GM23248 (cell line): ENCODE measurements at regions of chr6 and their contacts with region 1.

Region 1: GRCh38 chr6:82247634-82248232 is at the start of gene IBTK:
- DNase-seq: peak; percentile 97
- H3K4me3 ChIP-seq: peak within 1 kb of the TSS; percentile 94
- H3K27ac ChIP-seq: peak within 1 kb of the TSS; percentile 98
- H3K4me1 ChIP-seq: peaks cover 39% of the 10 kb centered on the region
- H3K27me3 ChIP-seq: no peaks in the 10 kb centered on the region
- total RNA-seq, gene IBTK: 41.9 and 44.5 TPM in 2 replicates

Region 2: DNA sequence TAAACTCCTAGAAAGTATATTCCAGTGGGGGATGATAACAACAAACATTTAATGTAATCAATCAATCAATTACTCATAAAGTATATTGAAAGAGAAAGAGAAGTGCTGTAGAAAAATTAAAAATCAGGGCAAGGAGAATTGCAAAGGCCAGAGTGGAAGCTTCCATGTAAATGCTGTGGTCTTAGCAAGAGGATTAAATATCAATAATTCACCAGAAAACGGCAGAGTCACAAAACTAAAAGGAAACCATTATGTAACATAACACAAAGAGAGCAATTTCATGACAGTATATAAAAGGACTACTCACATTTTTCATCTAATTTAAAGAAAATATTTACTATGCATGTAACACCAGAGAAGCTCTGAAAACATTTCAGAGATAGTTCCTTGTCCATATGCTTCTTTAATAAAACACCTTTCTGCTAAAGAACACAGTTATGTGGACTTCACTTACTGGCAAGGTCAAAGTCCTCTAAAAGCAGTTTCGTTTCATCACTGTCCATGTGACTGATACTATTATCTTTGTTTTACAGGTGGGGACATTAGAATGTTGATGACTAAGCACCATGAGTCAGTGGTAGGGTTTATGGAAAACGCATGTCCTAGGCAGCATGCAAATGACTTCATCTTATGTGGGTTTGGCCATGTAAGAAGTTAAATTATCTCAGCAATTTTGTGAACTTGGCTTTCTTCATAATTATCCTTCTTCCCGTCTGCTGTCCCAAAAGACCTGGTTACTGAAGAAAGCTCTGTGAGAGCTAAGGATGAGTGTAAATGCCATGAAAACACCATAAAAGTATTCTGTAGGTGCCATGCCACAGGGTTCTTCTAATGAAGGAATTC is 309.5 kb before region 1 on chr6:
- in situ Hi-C with region 1: no loop called
- DNase-seq: peak; percentile 92
- H3K4me3 ChIP-seq: peak overlapping the region; percentile 29
- H3K27ac ChIP-seq: peak overlapping the region; percentile 77
- H3K4me1 ChIP-seq: peaks cover 44% of the 10 kb centered on the region
- H3K27me3 ChIP-seq: no peaks in the 10 kb centered on the region

Region 3: GRCh38 chr6:83057705-83058321 is 810.1 kb after region 1 on chr6:
- in situ Hi-C with region 1: loop called (anchors 5 kb)
- DNase-seq: peak; percentile 75
- H3K4me3 ChIP-seq: no peak overlapping the region
- H3K27ac ChIP-seq: no peak overlapping the region
- H3K4me1 ChIP-seq: peaks cover 15% of the 10 kb centered on the region
- H3K27me3 ChIP-seq: no peaks in the 10 kb centered on the region

Region 4: GRCh38 chr6:83192871-83193746 is 945.4 kb after region 1 on chr6 and contains the starts of genes PGM3 and RWDD2A:
- in situ Hi-C with region 1: loop called (anchors 25 kb)
- DNase-seq: peak; percentile 97
- H3K4me3 ChIP-seq: peak within 1 kb of the TSS; percentile 88
- H3K27ac ChIP-seq: peak within 1 kb of the TSS; percentile 92
- H3K4me1 ChIP-seq: peaks cover 35% of the 10 kb centered on the region
- H3K27me3 ChIP-seq: no peaks in the 10 kb centered on the region
- total RNA-seq, gene PGM3: 74.4 and 89.0 TPM in 2 replicates
- total RNA-seq, gene RWDD2A: 4.4 and 6.1 TPM in 2 replicates